ENCODE measurements at regions of chr5 and their contacts with region 1.

Region 1: GRCh38 chr5:74576941-74577456 is 63.5 kb downstream of the ENC1 start:
- DNase-seq: peak; percentile 30
- H3K4me3 Mint-ChIP-seq: no peak overlapping the region
- H3K27ac Mint-ChIP-seq: peak overlapping the region; percentile 54
- H3K4me1 Mint-ChIP-seq: peaks cover 51% of the 10 kb centered on the region
- H3K27me3 Mint-ChIP-seq: peaks cover 5% of the 10 kb centered on the region

Region 2: DNA sequence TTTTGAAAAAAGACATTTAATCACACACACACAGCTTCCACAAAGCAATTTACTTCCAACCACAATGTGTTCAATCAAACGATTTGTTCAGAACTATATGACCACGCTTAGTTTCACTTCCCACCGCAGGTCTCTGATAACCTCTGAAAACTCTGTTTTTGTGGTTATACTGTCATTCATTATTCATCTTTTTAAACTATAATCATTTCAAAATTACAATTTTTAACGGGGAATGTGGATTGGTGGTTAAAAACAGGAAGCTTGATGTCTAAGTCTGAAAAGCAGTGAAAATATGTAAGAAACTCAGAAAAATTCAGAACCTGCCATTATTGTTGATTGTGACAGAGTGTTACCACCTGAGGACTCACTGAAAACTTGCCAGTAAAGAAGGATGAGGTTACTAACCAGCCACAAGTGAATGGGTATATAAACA is 1416.7 kb before region 1 on chr5:
- CTCF ChIA-PET with region 1: no interaction called
- POLR2A ChIA-PET with region 1: no interaction called
- intact Hi-C with region 1: loop called (anchors 5 kb)
- DNase-seq: peak; percentile 79
- H3K4me3 Mint-ChIP-seq: peak overlapping the region; percentile 12
- H3K27ac Mint-ChIP-seq: peak overlapping the region; percentile 4
- H3K4me1 Mint-ChIP-seq: peaks cover 28% of the 10 kb centered on the region
- H3K27me3 Mint-ChIP-seq: peaks cover 67% of the 10 kb centered on the region

Region 3: GRCh38 chr5:74316064-74316679 is 260.8 kb before region 1 on chr5:
- CTCF ChIA-PET with region 1: no interaction called
- POLR2A ChIA-PET with region 1: no interaction called
- intact Hi-C with region 1: loop called (anchors 1 kb)
- DNase-seq: peak; percentile 62
- H3K4me3 Mint-ChIP-seq: no peak overlapping the region
- H3K27ac Mint-ChIP-seq: no peak overlapping the region
- H3K4me1 Mint-ChIP-seq: peaks cover 24% of the 10 kb centered on the region
- H3K27me3 Mint-ChIP-seq: peaks cover 30% of the 10 kb centered on the region

Region 4: GRCh38 chr5:74631081-74631953 is 54.3 kb after region 1 on chr5:
- CTCF ChIA-PET with region 1: interaction called, 7 read pairs
- POLR2A ChIA-PET with region 1: interaction called, 3 read pairs
- intact Hi-C with region 1: loop called (anchors 1 kb)
- DNase-seq: peak; percentile 49
- H3K4me3 Mint-ChIP-seq: no peak overlapping the region
- H3K27ac Mint-ChIP-seq: peak overlapping the region; percentile 72
- H3K4me1 Mint-ChIP-seq: peaks cover 25% of the 10 kb centered on the region
- H3K27me3 Mint-ChIP-seq: peaks cover 16% of the 10 kb centered on the region

Region 5: DNA sequence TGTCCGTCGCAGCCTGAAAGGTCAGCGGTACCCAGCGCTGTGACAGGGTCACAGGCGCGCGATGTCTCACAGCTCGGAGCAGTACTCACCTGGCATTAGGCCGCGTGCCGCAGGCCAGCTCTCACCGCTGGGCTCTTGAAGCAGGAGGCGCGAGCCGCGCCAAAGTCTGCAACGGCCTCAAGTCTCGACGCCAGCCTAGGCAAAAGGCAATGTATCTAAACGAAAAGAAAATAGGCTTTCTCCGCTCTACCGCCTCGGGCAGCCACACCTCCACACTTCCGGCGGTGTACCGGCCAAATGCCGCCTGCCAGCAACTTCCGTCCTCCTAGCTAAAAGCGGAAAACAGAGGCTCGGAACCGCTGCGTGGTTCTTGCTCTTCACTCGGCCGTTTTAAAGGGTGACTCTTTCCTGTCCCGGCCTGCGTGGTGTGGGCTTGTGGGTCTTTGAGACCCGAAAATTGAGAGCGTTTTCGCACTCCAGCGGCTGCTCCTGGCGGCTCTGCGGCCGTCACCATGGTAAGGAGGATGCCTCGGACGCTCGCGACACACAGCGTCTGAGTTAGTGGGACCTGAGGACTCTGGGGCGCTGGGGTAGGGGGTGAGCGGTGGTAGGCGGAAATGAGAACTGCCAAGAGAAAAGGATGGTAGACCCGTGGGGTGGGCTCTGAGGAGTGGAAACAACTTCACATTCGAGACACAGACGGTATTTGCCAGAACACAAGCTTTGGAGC is 190.0 kb after region 1 on chr5 and contains the starts of genes GFM2 and NSA2:
- CTCF ChIA-PET with region 1: no interaction called
- POLR2A ChIA-PET with region 1: no interaction called
- intact Hi-C with region 1: loop called (anchors 2 kb)
- DNase-seq: peak; percentile 96
- H3K4me3 Mint-ChIP-seq: peak within 1 kb of the TSS; percentile 100
- H3K27ac Mint-ChIP-seq: peak within 1 kb of the TSS; percentile 97
- H3K4me1 Mint-ChIP-seq: peaks cover 36% of the 10 kb centered on the region
- H3K27me3 Mint-ChIP-seq: no peaks in the 10 kb centered on the region
- total RNA-seq, gene GFM2: 30.9 to 33.0 TPM
- total RNA-seq, gene NSA2: 96.1 to 98.0 TPM

Region 6: GRCh38 chr5:75668977-75669689 is 1092.1 kb after region 1 on chr5:
- CTCF ChIA-PET with region 1: no interaction called
- POLR2A ChIA-PET with region 1: no interaction called
- intact Hi-C with region 1: loop called (anchors 5 kb)
- DNase-seq: peak; percentile 87
- H3K4me3 Mint-ChIP-seq: peak overlapping the region; percentile 74
- H3K27ac Mint-ChIP-seq: peak overlapping the region; percentile 94
- H3K4me1 Mint-ChIP-seq: peaks cover 36% of the 10 kb centered on the region
- H3K27me3 Mint-ChIP-seq: no peaks in the 10 kb centered on the region